ENCODE measurements at regions of chr17 and their contacts with region 1.

Region 1: GRCh38 chr17:48724251-48725003 is 1.4 kb downstream of the PRAC2 start:
- DNase-seq: peak; percentile 89 to 97
- ATAC-seq: peak; percentile 33

Region 2: DNA sequence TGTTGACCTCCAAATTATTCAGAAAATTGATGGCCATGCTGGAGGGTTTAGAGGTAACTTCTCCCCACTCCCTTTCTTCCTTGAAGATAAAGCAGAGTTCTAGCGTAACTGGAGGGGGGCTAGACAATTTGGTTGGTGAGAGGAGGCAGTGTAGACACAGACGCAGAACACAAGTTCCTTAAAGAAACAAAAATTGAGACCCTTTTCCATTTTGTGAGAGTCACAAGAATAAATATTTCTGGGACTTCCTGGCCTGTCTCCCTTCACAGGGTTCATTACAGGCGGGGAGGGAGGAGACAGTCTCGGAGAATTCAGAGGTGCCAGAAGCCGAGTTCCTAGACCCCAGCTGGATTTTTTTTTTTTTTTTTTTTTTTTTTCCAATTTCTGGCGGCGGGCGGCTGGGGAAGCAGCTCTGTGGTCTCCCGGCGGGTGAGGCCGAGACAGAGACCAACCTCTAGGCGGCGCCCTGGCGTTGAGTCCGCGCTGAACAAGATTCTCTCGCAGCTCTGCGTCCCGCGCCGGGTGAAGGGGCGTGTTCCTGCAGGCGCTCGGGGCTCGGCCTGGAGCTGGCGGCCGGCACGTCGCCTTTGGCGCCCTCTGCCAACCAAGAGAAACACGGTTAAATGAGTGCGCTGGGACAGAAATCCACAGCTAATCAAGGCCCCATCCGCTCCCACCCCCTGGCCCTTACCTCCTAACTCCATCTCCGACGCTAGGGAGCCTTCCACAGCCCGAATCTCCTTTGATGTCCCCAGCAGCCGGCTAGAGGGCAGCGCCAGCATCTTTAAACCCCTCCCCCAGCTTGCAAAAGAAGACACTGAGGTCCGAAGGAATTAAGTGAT is 88.0 kb before region 1 on chr17:
- intact Hi-C with region 1: no loop called
- DNase-seq: peak; percentile 86 to 92
- ATAC-seq: peak; percentile 43

Region 3: DNA sequence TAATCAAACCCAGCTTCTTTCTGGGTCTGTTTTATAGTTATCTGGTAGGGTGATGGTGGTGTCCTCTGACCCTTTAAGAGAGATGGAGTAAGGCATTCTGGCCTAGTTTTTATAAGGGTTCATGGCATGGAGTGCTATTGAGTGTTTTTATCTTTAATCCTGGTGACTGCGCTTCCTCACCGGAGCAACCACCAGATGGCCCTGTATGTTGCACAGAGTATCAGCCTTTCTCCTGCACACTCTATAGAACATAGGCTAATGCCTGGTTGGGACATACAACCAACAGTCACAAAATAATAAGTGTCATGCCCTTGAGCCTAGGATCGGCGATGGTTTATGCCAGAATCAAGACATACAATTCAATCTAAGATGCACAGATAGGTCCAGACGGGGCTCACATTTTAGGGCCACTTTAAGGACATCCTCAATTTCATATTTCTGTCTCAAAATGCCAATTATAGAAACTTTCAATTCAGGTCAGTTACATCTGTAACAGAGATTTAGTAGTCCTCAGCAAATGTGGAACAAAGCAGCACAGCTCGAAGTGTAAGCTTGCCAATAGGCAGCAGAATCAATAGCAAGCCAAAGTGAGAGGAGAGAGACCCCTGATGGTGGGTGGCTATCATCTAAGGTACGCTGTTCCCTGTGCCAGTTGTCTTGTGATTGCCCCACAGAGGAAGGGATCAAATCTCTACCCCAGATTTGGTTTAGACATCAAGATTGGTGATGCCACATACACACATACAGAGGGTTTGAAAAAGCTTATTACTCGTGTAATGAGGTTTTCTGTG is 61.1 kb before region 1 on chr17:
- intact Hi-C with region 1: no loop called
- DNase-seq: no peak
- ATAC-seq: peak; percentile 32

Region 4: DNA sequence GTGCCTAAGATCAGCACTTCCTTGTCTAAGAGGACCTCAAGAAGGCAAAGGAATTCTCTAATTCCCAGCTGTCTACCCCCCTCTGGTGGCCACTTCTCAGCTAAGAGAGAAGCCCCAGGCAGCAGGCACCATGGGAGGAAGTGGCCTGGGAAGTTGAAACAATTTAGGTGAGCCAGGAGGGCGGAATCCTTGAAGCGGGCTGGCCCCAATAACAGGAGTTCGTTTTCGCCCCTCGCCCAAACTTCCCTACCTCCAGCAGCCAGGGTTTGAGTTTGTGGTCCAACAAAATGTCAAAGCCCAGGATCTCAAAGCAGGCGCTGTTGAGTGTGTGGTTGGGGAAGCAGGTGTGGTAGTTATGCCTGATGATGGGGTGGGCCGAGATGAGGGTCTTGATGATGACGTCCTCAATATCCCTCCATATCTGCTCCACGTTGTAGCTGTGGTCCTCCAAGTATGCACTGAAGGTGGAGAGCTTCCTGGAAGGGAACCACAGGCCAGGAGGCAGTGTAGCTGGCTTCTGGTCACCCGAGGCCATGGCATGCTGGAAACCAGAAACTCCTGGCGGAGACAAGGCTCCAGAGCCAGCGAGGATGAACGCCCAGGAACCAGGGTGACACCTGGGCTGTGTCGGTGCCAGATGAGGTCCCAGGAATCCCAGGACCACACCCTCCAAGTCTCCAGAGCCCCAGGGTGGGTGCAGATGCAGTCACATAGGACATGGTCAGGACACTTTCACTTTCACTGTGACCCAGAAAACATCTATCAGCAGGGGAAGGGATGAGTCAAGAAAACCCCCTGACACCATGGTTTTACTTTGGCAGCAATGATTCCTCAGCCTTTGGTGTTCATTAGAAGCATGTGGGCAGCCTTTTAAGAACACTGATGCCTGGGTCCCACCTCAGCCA is 67.0 kb after region 1 on chr17:
- intact Hi-C with region 1: loop called in 1 of 2 experiments (anchors 5 kb)
- DNase-seq: peak; percentile 89 to 93
- ATAC-seq: peak; percentile 80

Measured in left colon (tissue), 2 donors.